Naive thymus-derived CD4-positive, alpha-beta T cell (primary cell): ENCODE measurements at regions of chr14 and their contacts with region 1.

Region 1: DNA sequence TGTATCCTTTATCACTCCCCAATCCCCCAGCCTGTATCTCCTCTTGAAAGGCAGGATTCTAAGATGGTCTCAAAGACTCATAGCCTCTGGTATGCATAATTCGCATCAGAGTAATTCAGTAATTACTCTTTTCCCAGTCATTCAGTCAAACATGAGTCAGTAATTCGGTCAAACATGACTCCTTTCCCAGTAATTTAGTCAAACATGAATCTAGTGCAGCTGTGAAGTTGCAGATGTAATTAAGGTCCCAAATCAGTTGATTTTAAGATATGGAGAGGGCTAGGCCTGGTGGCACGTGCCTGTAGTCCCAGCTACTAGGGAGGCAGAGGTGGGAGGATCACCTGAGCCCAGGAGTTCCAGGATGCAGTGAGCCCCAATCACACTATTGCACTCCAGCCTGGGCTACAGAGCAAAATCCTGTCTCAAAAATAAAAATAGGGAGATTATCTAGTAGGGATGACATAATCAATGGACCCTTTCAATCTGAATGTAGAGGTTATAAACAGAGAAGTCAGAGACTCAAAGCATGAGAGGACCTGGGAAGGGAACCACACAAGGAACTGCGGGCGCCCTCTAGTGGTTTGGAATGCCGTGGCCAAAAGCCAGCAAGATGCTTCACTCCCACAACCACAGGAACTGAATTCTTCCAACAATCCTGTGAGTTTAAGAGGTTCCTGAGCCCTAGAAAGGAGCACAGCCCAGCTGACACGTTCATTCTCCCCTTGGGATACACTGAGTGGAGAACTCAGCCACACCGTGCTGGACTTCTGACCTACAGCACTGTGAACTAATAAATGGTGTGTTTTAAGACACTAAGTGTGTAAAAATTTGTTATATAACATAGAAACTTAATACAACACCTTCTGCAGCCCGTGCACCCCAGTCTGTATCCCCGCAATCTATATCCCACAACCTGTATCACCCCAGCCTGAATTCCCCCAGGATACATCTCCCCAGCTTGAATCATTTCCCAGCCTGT is 14.3 kb upstream of the ARMH4 start:
- DNase-seq: peak; percentile 18 to 70 (median 53)
- ATAC-seq: peak; percentile 73
- H3K4me3 ChIP-seq: no peak overlapping the region
- H3K4me3 Mint-ChIP-seq: no peak overlapping the region
- H3K27ac ChIP-seq: no peak overlapping the region
- H3K27ac Mint-ChIP-seq: no peak overlapping the region
- H3K4me1 ChIP-seq: no peaks in the 10 kb centered on the region
- H3K4me1 Mint-ChIP-seq: peaks cover 0 to 4% (median 0%) of the 10 kb centered on the region in 7 donors
- H3K27me3 ChIP-seq: no peaks in the 10 kb centered on the region
- H3K27me3 Mint-ChIP-seq: peaks cover 11 to 30% (median 15%) of the 10 kb centered on the region in 5 donors

Region 2: DNA sequence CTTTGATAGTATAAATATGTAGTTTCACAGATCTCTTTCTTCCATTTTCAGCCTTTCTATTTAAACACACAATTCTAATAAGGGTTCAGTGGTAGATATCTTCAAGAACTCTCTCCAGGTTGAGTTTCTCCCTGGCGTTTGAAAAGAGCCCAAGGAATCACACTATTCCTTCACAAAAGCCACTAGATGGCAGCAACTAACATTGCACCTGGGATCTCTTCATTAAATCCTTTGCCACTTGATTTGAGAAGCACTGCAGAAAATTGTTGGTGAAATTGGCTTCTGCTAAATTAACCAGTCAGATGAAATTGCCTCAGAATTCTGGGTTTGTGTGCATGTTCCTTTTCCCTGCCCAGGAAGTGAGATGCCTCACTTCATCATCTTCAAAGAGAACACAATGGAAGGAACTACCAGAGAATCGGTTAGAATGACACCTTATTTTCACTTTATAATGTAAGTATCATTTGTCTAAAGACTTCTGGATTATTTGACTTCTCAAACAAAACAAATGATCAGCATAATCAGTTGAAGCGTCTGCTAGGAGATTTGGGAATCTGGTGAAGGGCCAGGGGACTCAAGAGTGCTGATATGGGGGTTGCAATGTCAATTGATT is 679.4 kb before region 1 on chr14:
- CTCF ChIA-PET with region 1: no interaction called
- POLR2A ChIA-PET with region 1: no interaction called
- intact Hi-C with region 1: loop called in 1 of 2 experiments (anchors 10 kb)
- DNase-seq: peak in 2 of 9 donors; percentile 1 to 2
- ATAC-seq: no peak
- H3K4me3 ChIP-seq: no peak overlapping the region
- H3K4me3 Mint-ChIP-seq: no peak overlapping the region
- H3K27ac ChIP-seq: no peak overlapping the region
- H3K27ac Mint-ChIP-seq: no peak overlapping the region
- H3K4me1 ChIP-seq: no peaks in the 10 kb centered on the region
- H3K4me1 Mint-ChIP-seq: peaks cover 0 to 3% (median 0%) of the 10 kb centered on the region in 7 donors
- H3K27me3 ChIP-seq: no peaks in the 10 kb centered on the region
- H3K27me3 Mint-ChIP-seq: peaks cover 2 to 8% (median 6%) of the 10 kb centered on the region in 5 donors

Region 3: GRCh38 chr14:57909626-57910025 is 256.7 kb before region 1 on chr14:
- CTCF ChIA-PET with region 1: no interaction called
- POLR2A ChIA-PET with region 1: no interaction called
- intact Hi-C with region 1: no loop called
- DNase-seq: no peak
- ATAC-seq: no peak
- H3K4me3 ChIP-seq: no peak overlapping the region
- H3K4me3 Mint-ChIP-seq: no peak overlapping the region
- H3K27ac ChIP-seq: no peak overlapping the region
- H3K27ac Mint-ChIP-seq: no peak overlapping the region
- H3K4me1 ChIP-seq: no peaks in the 10 kb centered on the region
- H3K4me1 Mint-ChIP-seq: no peaks in the 10 kb centered on the region
- H3K27me3 ChIP-seq: no peaks in the 10 kb centered on the region
- H3K27me3 Mint-ChIP-seq: peaks cover 0 to 25% (median 11%) of the 10 kb centered on the region in 5 donors

Region 4: DNA sequence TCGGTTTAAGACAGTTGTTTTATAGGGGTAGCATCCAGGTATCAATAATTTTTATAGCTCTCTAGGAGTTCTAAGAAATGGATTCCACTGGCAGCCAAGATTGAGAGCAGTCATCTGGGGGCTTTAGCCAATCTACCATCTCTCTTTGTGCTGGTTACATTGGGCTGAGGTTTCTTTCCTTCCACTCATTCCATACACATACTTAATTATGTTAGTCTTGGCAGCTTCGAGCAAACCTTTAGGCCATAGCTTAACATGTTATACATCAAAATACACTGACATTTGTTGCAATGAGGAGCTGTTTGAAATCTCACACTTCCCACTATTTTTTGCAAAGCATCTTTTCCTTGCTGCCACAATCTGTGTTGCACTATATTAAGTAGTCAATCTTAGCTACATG is 77.3 kb before region 1 on chr14:
- CTCF ChIA-PET with region 1: no interaction called
- POLR2A ChIA-PET with region 1: no interaction called
- intact Hi-C with region 1: no loop called
- DNase-seq: no peak
- ATAC-seq: no peak
- H3K4me3 ChIP-seq: no peak overlapping the region
- H3K4me3 Mint-ChIP-seq: no peak overlapping the region
- H3K27ac ChIP-seq: no peak overlapping the region
- H3K27ac Mint-ChIP-seq: no peak overlapping the region
- H3K4me1 ChIP-seq: no peaks in the 10 kb centered on the region
- H3K4me1 Mint-ChIP-seq: no peaks in the 10 kb centered on the region
- H3K27me3 ChIP-seq: no peaks in the 10 kb centered on the region
- H3K27me3 Mint-ChIP-seq: peaks cover 0 to 36% (median 31%) of the 10 kb centered on the region in 5 donors

Region 5: DNA sequence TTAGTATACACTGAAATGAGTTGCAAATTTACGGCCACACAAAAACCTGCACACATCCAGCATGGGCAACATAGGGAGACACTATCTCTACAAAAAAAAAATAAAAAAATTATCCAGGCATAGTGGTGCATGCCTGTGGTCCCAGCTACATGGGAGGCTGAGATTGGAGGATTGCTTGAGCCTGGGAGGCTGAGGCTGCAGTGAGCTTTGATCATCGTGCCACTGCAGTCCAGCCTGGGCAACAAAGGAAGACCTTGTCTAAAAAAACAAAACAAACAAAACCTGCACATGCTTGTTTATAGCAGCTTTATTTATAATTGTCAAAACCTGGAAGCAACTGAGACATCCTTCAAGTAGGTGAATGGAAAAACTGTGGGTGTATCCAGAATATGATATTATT is 224.5 kb after region 1 on chr14:
- CTCF ChIA-PET with region 1: no interaction called
- POLR2A ChIA-PET with region 1: no interaction called
- intact Hi-C with region 1: no loop called
- DNase-seq: no peak
- ATAC-seq: no peak
- H3K4me3 ChIP-seq: no peak overlapping the region
- H3K4me3 Mint-ChIP-seq: no peak overlapping the region
- H3K27ac ChIP-seq: no peak overlapping the region
- H3K27ac Mint-ChIP-seq: no peak overlapping the region
- H3K4me1 ChIP-seq: peaks cover 5 to 8% of the 10 kb centered on the region in 2 donors
- H3K4me1 Mint-ChIP-seq: peaks cover 0 to 6% (median 4%) of the 10 kb centered on the region in 7 donors
- H3K27me3 ChIP-seq: no peaks in the 10 kb centered on the region
- H3K27me3 Mint-ChIP-seq: no peaks in the 10 kb centered on the region

Region 6: DNA sequence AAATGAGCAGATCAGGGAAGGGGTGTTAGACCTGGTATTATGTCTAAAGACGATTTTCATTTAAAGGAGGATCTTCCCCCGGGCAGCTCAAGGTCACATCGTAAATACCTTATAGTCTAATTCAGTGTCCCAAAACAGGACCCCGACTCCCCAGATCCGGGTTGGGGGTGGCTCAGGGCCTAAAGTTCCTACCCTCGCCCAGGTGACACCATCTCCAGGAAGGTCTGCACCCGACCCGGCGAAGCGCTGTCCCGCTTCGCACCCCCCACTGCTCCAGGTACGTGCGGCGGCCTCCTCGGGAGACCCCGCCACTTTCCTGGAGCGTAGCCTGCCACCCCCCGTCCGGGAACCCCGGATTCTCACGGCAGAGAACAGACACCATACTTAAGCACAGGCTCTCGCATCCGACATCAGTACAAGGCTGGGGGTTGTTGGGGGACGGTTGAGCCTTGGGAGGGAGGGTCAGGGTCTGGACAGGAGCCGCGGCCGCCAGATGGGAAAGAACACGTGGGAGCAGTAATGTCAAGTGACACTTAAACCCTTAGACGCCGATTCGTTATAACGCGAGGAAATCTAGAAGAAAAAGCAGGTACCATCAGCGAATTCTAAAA is 260.5 kb after region 1 on chr14:
- CTCF ChIA-PET with region 1: no interaction called
- POLR2A ChIA-PET with region 1: no interaction called
- intact Hi-C with region 1: no loop called
- DNase-seq: peak in 3 of 9 donors; percentile 38 to 56 (median 45)
- ATAC-seq: peak; percentile 26
- H3K4me3 ChIP-seq: peak overlapping the region; percentile 88
- H3K4me3 Mint-ChIP-seq: peak overlapping the region; percentile 82 to 100 (median 94)
- H3K27ac ChIP-seq: peak overlapping the region; percentile 93
- H3K27ac Mint-ChIP-seq: peak overlapping the region; percentile 95 to 99 (median 98)
- H3K4me1 ChIP-seq: peaks cover 13 to 17% of the 10 kb centered on the region in 2 donors
- H3K4me1 Mint-ChIP-seq: peaks cover 18 to 62% (median 49%) of the 10 kb centered on the region in 7 donors
- H3K27me3 ChIP-seq: no peaks in the 10 kb centered on the region
- H3K27me3 Mint-ChIP-seq: peaks cover 0 to 3% (median 0%) of the 10 kb centered on the region in 5 donors